ENCODE measurements at regions of chr15 and their contacts with region 1.

Region 1: DNA sequence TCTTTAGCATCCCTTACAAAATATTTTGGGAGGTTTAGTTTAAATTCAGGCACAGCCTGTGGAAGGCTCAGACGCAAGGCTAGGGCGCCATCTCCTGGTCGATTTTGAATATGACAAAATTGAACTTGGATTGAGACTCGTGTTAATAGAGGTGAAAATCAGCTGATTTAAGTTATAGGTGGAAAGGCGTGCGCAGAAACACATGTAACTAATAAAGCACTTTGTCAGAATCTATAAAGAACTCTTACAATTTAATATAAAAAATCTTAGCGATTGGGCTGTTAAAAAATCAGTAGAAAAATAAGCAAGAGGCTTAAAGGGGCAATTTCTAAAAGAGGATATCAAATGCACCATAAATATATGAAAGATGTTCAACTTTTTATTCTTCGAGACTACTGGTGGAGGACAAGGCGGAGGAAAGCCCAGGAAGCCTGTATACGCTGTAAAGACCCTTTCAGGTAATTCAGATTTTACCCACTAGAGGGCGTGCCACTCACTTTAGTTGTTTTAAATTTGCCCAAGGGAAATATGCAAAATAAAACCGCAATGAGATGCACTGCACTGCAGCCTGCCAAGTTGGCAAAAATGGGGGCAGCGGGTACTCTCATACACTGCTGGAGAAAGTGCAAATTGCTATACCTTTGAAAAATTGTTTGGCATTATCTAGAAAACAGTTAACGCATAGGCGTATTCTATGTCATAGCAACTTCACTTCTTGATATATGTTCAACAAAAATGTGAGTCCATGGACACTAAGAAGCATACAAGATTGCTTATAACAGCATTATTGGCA is 64.7 kb downstream of the SLC30A4 start:
- DNase-seq: peak in 1 of 3 donors; percentile 76
- ATAC-seq: peak; percentile 82 to 90 (median 86)
- H3K4me3 ChIP-seq: peak overlapping the region; percentile 9 to 50 (median 49)
- H3K27ac ChIP-seq: peak overlapping the region; percentile 50 to 64 (median 62)
- H3K4me1 ChIP-seq: no peaks in the 10 kb centered on the region
- H3K27me3 ChIP-seq: no peaks in the 10 kb centered on the region
- CTCF ChIP-seq: peak; percentile 62 to 72 (median 65)
- POLR2A ChIP-seq: no peak

Region 2: GRCh38 chr15:45346381-45346780 is 111.5 kb before region 1 on chr15:
- intact Hi-C with region 1: no loop called
- DNase-seq: no peak
- ATAC-seq: no peak
- H3K4me3 ChIP-seq: no peak overlapping the region
- H3K27ac ChIP-seq: no peak overlapping the region
- H3K4me1 ChIP-seq: peaks cover 0 to 57% (median 23%) of the 10 kb centered on the region in 4 donors
- H3K27me3 ChIP-seq: no peaks in the 10 kb centered on the region
- CTCF ChIP-seq: no peak
- POLR2A ChIP-seq: no peak

Region 3: DNA sequence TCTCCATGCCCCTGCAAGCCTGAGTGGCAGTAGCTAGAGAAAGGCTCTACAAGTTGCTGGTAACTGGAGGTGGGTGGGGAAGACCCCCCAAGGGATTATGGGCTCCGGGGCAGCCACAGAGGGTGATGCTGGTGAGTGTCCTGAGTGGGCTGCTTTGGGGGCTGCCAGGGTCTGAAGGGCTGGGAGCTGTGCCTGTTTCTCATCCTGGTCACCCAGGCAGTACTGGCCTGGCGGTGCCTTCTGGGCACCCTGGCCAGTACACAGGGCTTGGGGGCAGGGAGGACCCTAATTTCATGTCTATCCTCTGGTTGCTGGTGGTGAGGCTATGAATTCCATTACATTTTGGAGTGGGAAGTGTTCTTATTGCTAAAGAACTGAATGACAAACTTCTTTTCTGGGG is 33.4 kb before region 1 on chr15:
- intact Hi-C with region 1: loop called in 1 of 2 experiments (anchors 5 kb)
- DNase-seq: no peak
- ATAC-seq: no peak
- H3K4me3 ChIP-seq: no peak overlapping the region
- H3K27ac ChIP-seq: no peak overlapping the region
- H3K4me1 ChIP-seq: no peaks in the 10 kb centered on the region
- H3K27me3 ChIP-seq: no peaks in the 10 kb centered on the region
- CTCF ChIP-seq: no peak
- POLR2A ChIP-seq: no peak

Region 4: DNA sequence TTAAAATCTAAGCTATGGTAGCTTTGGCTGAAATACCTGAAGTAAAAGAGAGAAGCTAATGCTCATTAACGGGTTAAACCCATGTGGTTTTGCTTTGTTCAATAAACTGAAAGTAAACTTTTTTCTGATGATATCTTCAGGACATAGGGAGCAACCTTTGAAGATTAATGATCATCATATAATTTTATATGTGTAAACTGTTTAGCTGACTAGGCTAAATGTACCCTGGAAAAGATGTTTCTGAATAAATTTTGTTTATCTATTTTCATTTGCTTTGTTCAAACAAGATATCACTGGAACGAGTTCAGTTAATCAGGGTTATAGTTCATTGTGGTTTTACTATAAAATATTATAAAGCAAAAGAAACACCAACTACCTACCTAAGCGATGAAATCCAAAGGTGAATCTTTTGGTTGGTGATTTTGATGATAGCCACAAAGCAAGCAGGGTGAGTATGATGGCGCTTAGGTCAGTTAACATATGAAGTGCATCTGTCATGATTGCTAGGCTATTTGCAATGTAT is 53.0 kb after region 1 on chr15:
- intact Hi-C with region 1: no loop called
- DNase-seq: no peak
- ATAC-seq: no peak
- H3K4me3 ChIP-seq: no peak overlapping the region
- H3K27ac ChIP-seq: no peak overlapping the region
- H3K4me1 ChIP-seq: no peaks in the 10 kb centered on the region
- H3K27me3 ChIP-seq: no peaks in the 10 kb centered on the region
- CTCF ChIP-seq: no peak
- POLR2A ChIP-seq: no peak

Region 5: GRCh38 chr15:45618813-45619212 is 161.0 kb after region 1 on chr15:
- intact Hi-C with region 1: loop called (anchors 5 to 10 kb)
- DNase-seq: no peak
- ATAC-seq: no peak
- H3K4me3 ChIP-seq: no peak overlapping the region
- H3K27ac ChIP-seq: no peak overlapping the region
- H3K4me1 ChIP-seq: no peaks in the 10 kb centered on the region
- H3K27me3 ChIP-seq: no peaks in the 10 kb centered on the region
- CTCF ChIP-seq: no peak
- POLR2A ChIP-seq: no peak

Measured in right lobe of liver (tissue), 6 donors.